Naive thymus-derived CD4-positive, alpha-beta T cell (primary cell): ENCODE measurements at regions of chr1 and their contacts with region 1.

Region 1: DNA sequence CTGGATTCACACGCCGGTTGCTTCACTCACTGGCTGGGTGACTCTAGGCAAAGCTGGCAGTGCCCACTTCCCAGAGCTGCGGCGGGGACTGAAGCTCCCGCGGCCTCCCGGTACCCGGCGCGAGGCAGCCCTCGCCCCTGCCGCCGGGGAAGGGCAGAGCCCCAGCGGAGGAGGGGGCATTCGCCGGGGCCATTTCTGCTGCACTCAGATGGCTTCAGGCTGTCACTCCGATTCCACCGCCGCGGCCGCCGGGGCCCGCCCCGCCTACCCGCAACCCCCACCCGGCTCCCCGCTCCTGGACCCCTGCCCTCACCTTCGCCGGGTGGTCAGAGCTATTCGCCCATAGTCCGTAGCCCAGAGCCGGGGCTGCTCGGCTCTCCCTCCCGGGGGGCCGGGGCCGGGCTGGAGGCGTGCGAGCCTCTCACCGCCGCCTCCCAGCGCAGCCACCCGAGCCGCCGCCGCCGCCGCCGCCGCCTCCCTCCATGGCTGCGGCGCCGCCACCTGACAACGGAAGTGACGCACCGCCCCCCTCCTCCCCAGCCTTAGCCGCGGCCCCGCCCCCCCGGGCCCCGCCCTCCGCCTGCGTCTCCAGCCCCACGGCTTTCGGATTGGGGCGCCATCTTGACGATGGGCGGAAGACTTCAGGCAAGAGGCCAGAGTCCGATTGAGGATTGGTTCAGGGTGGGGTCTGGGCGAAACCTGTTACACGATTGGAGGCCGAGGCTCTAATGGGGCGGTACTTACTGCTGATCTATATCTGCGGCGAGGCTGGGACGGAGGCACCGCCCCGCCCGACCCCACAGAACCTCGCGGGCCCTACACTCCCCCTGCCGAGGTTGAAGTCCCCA is at the start of gene STK40:
- DNase-seq: peak; percentile 83 to 99 (median 96)
- ATAC-seq: peak; percentile 92
- H3K4me3 ChIP-seq: peak within 1 kb of the TSS; percentile 96
- H3K4me3 Mint-ChIP-seq: peak within 1 kb of the TSS; percentile 85 to 95 (median 93)
- H3K27ac ChIP-seq: peak within 1 kb of the TSS; percentile 97
- H3K27ac Mint-ChIP-seq: peak within 1 kb of the TSS; percentile 95 to 99 (median 97)
- H3K4me1 ChIP-seq: peaks cover 26 to 29% of the 10 kb centered on the region in 2 donors
- H3K4me1 Mint-ChIP-seq: peaks cover 52 to 67% (median 57%) of the 10 kb centered on the region in 7 donors
- H3K27me3 ChIP-seq: no peaks in the 10 kb centered on the region
- H3K27me3 Mint-ChIP-seq: no peaks in the 10 kb centered on the region
- total RNA-seq, gene STK40: 27.6 to 56.8 (median 48.2) TPM

Region 2: DNA sequence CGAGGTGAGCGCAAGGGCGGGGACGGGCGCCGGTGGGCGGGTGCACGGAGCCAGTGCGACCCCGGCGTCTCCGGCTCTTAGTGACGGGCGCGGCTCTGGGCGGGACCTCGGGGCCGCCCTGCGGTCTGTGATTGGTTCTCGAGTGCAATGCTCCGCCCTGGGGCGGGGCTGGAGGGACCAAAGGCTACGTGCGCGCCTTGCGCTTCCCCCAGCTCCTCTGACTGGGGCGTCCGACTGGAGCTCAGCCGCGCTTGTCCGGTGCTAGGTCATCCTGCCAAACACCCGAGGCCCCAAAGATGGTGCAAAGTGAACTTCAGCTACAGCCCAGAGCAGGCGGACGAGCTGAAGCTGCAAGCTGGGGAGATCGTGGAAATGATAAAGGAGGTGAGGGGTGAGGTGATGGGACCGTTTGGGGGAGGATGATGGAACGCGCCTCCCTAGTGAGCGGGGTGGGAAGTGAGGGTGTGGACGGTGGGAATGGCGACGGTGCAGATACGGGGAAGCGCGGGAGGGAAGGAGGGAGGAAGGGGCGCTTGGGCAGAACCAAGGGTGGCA is 78.7 kb before region 1 on chr1:
- CTCF ChIA-PET with region 1: interaction called, 3 read pairs
- POLR2A ChIA-PET with region 1: interaction called, 3 read pairs
- intact Hi-C with region 1: loop called (anchors 1 kb)
- DNase-seq: peak; percentile 90 to 96 (median 93)
- ATAC-seq: peak; percentile 99
- H3K4me3 ChIP-seq: peak overlapping the region; percentile 87
- H3K4me3 Mint-ChIP-seq: peak overlapping the region; percentile 87 to 98 (median 96)
- H3K27ac ChIP-seq: peak overlapping the region; percentile 81
- H3K27ac Mint-ChIP-seq: peak overlapping the region; percentile 70 to 97 (median 87)
- H3K4me1 ChIP-seq: peaks cover 0 to 6% of the 10 kb centered on the region in 2 donors
- H3K4me1 Mint-ChIP-seq: peaks cover 6 to 39% (median 13%) of the 10 kb centered on the region in 7 donors
- H3K27me3 ChIP-seq: no peaks in the 10 kb centered on the region
- H3K27me3 Mint-ChIP-seq: no peaks in the 10 kb centered on the region

Region 3: DNA sequence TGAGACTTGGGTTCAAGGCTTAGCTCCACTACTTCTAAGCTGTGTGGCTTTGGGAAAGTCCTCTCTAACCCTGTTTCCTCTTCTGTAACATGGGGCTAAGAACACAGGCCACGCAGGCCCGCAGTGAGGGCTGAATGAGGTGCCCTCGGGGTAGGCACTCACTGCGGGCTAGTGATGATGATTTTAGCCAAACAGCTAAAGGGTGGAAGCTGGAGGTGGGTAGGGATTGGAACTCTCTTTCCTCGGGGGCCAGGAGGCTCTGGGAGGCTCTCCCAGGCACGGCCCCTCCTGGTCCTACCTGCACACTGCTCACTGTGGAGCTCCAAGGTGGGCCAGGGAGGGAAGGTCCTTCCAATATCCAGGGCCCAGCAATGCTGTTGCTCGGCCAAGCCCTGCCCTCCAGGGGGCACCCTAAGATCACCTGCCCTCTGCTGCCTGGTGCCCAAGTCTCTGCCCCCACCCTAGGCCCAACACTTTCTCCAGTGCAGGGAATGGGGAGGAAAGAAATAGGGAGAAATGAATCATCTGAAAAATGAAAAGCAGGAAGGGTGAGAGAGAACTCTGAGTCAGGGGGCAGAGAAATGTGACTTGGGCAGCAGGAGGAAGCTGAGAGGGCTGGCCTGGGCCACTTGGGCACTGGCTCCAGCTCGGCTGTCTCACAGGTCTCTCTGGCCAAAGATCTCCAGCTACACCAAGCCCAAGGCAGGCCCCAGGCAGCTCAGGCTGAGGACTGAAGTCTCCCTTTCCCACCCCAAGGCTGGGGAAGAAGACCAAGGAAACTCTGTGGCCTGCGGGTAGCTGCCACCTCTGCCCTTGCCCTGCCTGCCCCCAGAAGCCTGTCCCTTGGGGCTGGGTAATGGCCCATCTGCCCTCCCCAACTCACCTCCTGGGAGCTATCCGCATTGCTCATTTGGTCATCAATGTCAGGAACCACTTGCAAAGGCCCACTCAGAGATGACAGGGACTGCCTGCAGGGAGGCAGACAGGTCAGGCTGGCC is 42.9 kb before region 1 on chr1:
- CTCF ChIA-PET with region 1: interaction called, 38 read pairs
- POLR2A ChIA-PET with region 1: interaction called, 10 read pairs
- intact Hi-C with region 1: loop called in 1 of 2 experiments (anchors 1 kb)
- DNase-seq: peak; percentile 47 to 72 (median 58)
- ATAC-seq: peak; percentile 86
- H3K4me3 ChIP-seq: no peak overlapping the region
- H3K4me3 Mint-ChIP-seq: no peak overlapping the region
- H3K27ac ChIP-seq: no peak overlapping the region
- H3K27ac Mint-ChIP-seq: peak overlapping the region in 6 of 9 donors; percentile 32 to 86 (median 71)
- H3K4me1 ChIP-seq: peaks cover 0 to 8% of the 10 kb centered on the region in 2 donors
- H3K4me1 Mint-ChIP-seq: peaks cover 6 to 40% (median 28%) of the 10 kb centered on the region in 7 donors
- H3K27me3 ChIP-seq: no peaks in the 10 kb centered on the region
- H3K27me3 Mint-ChIP-seq: no peaks in the 10 kb centered on the region

Region 4: DNA sequence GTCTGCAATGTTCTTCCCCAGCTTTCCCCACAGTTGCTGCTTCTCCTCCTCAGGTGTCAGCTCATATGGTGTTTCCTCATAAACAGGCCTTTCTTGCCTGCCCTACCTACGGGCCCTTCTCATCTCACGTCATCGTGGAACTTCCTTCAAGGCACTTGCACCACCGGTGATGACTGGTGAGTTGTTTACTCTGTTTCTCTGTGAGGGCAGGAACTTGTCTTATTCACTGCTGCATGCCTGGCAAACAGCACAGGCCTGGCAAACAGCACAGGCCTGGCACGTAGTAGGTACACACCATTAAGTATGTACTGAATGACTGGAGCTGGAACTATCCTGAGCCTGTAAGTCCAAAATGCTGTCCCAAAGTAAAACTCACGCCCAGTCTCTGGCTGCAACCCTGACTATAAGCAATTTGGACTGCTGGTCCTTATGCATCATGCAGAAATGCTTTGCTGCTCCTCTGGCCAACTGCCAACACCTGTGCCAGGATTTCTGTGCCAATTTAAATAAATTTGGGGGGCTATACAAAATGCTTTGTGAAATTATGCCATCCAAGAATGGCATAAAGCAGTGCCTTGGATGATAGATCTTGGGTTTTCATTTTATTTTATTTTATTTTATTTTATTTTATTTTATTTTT is 25.6 kb before region 1 on chr1:
- CTCF ChIA-PET with region 1: interaction called, 8 read pairs
- POLR2A ChIA-PET with region 1: interaction called, 16 read pairs
- intact Hi-C with region 1: loop called in 1 of 2 experiments (anchors 1 kb)
- DNase-seq: peak in 7 of 9 donors; percentile 43 to 77 (median 74)
- ATAC-seq: peak; percentile 95
- H3K4me3 ChIP-seq: no peak overlapping the region
- H3K4me3 Mint-ChIP-seq: peak overlapping the region in 9 of 10 donors; percentile 35 to 79 (median 61)
- H3K27ac ChIP-seq: peak overlapping the region; percentile 52
- H3K27ac Mint-ChIP-seq: peak overlapping the region; percentile 91 to 99 (median 94)
- H3K4me1 ChIP-seq: peaks cover 0 to 19% of the 10 kb centered on the region in 2 donors
- H3K4me1 Mint-ChIP-seq: peaks cover 7 to 29% (median 27%) of the 10 kb centered on the region in 7 donors
- H3K27me3 ChIP-seq: no peaks in the 10 kb centered on the region
- H3K27me3 Mint-ChIP-seq: no peaks in the 10 kb centered on the region

Region 5: DNA sequence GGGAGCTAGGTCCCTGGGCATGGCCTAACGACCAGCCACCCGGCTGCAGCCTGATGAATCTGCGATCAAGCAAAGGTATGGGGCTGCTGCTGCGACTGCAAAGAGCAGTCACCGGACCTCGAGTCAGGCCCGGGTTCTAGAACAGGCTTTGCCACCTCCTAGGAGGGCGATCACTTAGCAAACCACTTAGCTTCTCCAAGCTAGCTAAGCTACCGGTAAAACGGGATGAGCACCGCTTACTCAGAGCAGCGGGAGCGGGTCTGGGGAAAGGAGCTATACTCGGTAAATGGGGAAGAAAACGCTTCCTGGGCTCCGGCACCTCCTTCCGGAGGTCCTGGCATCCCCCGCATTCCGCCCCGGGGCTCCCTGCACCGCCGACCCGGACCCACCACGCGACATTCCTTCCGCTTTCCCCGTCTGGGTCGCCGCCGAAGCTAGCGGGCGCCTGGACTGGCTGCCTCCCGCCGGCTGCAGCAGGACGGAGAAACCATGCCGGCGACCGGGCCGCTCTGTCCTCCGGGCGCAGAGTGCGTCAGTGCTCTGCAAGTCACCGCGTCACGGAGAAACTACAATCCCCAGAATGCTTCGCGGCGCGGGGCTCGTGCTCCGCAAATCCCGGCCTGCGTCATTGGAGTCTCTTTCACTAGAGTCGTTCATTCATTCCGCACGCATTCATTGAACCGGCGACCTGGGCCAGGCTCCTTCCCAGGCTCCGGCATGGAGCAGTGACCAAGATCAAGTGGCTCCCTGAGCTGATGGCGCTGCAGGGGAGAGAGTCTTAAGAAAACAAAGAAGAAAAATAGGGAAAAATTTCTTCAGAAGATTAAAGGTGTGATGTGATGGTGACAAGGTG is 12.0 kb after region 1 on chr1 and contains the start of gene LSM10:
- CTCF ChIA-PET with region 1: interaction called, 7 read pairs
- POLR2A ChIA-PET with region 1: interaction called, 37 read pairs
- intact Hi-C with region 1: loop called (anchors 1 kb)
- DNase-seq: peak; percentile 71 to 92 (median 83)
- ATAC-seq: peak; percentile 77
- H3K4me3 ChIP-seq: peak within 1 kb of the TSS; percentile 88
- H3K4me3 Mint-ChIP-seq: peak within 1 kb of the TSS; percentile 87 to 100 (median 97)
- H3K27ac ChIP-seq: peak within 1 kb of the TSS; percentile 89
- H3K27ac Mint-ChIP-seq: peak within 1 kb of the TSS; percentile 82 to 100 (median 99)
- H3K4me1 ChIP-seq: peaks cover 13 to 16% of the 10 kb centered on the region in 2 donors
- H3K4me1 Mint-ChIP-seq: peaks cover 19 to 48% (median 34%) of the 10 kb centered on the region in 7 donors
- H3K27me3 ChIP-seq: no peaks in the 10 kb centered on the region
- H3K27me3 Mint-ChIP-seq: no peaks in the 10 kb centered on the region
- total RNA-seq, gene LSM10: 21.9 to 49.7 (median 35.7) TPM

Region 6: GRCh38 chr1:36450270-36450918 is 64.8 kb after region 1 on chr1 and contains the start of gene OSCP1:
- CTCF ChIA-PET with region 1: no interaction called
- POLR2A ChIA-PET with region 1: interaction called, 3 read pairs
- intact Hi-C with region 1: loop called in 1 of 2 experiments (anchors 1 kb)
- DNase-seq: peak; percentile 73 to 88 (median 83)
- ATAC-seq: peak; percentile 98
- H3K4me3 ChIP-seq: peak within 1 kb of the TSS; percentile 93
- H3K4me3 Mint-ChIP-seq: peak within 1 kb of the TSS; percentile 88 to 98 (median 92)
- H3K27ac ChIP-seq: peak within 1 kb of the TSS; percentile 94
- H3K27ac Mint-ChIP-seq: peak within 1 kb of the TSS; percentile 81 to 99 (median 96)
- H3K4me1 ChIP-seq: peaks cover 0 to 10% of the 10 kb centered on the region in 2 donors
- H3K4me1 Mint-ChIP-seq: peaks cover 7 to 30% (median 23%) of the 10 kb centered on the region in 7 donors
- H3K27me3 ChIP-seq: no peaks in the 10 kb centered on the region
- H3K27me3 Mint-ChIP-seq: no peaks in the 10 kb centered on the region
- total RNA-seq, gene OSCP1: 0.65 to 2.0 (median 0.93) TPM